ENCODE measurements at regions of chr18 and their contacts with region 1.

Region 1: DNA sequence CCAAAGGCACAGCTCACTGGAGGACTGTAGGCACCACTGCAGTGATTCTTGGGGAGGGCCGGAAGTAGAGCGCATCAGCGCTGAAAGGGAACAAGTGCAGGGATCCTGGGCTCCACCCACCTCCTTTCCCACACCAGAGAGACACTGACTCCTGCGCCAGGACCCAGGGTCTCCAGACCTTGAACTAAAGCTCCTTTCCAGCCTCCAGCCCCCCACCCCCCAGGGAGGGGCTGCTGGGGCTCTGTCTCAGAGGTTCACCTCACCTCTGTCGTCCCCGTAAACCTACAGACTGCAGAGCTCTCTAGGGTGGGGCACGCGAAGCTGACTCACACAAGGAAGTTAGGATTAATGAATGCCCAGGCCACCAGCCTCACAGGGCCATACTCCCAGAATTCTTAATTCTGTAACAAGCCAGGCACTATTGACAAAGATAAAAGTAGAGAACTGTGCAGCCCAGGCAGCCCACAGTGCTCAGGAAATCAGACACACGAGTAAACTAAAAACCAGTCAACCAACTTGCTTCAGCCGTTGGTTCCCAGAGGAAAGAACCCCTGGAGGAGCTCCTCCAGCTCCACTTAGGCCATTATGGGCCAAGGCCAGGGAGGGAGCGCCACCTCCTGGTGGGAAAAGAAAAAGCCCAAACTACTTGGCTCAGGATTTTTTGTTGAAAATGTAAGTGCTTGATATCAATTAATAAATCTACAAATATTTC is 45.1 kb upstream of the ACAA2 start:
- DNase-seq: peak; percentile 89
- H3K4me3 Mint-ChIP-seq: no peak overlapping the region
- H3K27ac Mint-ChIP-seq: no peak overlapping the region
- H3K4me1 Mint-ChIP-seq: peaks cover 2% of the 10 kb centered on the region
- H3K27me3 Mint-ChIP-seq: no peaks in the 10 kb centered on the region

Region 2: DNA sequence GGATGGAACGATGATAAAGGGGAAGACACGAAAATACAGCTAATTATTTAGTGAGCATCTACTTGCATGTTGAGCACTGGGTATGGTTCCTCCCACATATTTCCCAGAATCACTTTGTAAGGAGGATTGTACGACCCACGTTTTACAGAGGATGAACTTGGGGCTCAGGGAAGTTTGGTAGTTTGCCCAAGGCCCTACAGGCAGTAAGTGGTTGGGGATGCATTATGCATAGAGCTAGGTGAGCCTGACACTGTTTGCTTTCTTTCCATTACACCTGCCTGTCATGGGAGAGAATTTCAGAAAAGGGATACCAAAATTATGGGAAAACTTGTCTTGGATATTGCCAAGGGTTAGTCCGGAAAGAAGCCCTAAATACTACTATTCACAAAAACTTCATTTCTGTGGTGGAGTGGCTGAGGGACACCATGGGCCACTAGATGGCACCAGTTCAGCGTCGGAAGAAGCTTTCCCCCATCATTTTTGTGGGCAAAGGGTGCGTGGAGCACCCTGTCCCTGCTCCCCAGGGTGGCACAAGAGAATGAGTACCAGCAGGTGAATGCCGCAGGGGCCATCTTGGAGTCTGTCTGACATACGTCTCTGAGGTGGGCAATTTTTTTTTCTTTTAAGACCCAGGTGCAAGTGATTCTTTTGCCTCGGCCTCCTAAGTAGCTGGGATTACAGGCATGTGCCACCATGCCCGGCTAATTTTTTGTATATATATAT is 347.9 kb before region 1 on chr18:
- intact Hi-C with region 1: loop called (anchors 1 kb)
- DNase-seq: peak; percentile 84
- H3K4me3 Mint-ChIP-seq: no peak overlapping the region
- H3K27ac Mint-ChIP-seq: no peak overlapping the region
- H3K4me1 Mint-ChIP-seq: no peaks in the 10 kb centered on the region
- H3K27me3 Mint-ChIP-seq: peaks cover 15% of the 10 kb centered on the region

Region 3: DNA sequence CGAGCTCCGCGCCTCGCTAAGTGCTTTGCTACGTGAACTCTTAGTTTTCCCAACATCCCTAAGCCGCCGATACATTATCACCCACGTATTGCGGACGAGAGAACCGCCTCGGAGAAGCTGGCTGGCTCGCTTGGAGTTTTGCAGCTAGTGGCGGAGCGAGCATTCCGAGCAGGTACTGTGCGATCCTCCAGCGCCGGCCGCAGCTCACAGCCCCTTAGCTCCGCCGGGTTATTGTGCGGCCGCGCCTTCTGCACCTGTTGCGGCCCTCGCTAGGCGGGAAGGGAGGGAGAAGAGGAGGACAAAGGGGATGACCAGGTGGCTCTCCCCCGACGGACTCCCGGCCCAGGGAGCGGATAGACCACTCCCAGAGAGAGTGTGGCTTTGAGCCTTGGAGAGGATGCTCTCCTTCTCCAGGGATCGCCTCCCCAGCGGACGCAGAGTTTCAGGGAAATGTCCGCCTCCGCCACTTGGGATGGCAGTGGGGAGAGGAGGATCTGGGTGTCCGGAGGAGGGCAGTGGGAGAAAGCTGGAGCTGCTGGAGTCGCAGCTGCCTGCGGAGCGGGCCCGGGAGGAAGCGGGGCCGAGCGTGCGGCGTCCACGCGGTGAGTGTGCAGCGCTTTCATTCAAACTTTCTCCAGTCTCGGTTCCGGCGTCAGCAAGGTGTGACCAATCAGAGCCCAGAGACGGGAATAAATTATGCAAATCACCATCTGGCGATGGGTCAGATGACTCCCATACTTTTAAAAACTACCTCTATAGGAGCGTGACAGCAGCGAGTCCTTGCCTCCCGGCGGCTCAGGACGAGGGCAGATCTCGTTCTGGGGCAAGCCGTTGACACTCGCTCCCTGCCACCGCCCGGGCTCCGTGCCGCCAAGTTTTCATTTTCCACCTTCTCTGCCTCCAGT is 296.9 kb before region 1 on chr18 and contains the start of gene LIPG:
- intact Hi-C with region 1: loop called (anchors 1 kb)
- DNase-seq: peak; percentile 85
- H3K4me3 Mint-ChIP-seq: peak within 1 kb of the TSS; percentile 73
- H3K27ac Mint-ChIP-seq: no peak within 1 kb of the TSS
- H3K4me1 Mint-ChIP-seq: peaks cover 31% of the 10 kb centered on the region
- H3K27me3 Mint-ChIP-seq: peaks cover 78% of the 10 kb centered on the region
- total RNA-seq, gene LIPG: 0.57 and 0.82 TPM in 2 replicates

Region 4: DNA sequence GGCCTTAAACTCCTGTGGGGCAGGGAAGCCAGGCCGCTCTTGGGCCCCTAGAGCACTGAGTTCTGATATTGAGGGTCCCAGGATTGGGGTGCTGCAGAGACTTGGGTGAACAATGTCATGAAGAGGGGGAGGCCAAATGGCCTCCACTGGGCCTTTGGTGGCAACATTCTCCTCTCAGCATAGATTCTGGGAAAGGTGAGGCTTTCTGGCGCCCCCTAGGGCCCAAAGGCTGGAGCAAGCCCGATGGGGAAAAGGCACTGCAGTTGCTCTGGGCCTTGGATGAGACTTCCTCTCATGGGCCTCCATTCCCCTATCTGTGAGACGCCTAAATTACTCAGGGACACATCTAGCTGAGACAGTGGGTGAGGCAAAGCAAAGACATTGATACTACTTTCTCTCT is 129.9 kb before region 1 on chr18:
- intact Hi-C with region 1: loop called (anchors 5 kb)
- DNase-seq: peak; percentile 81
- H3K4me3 Mint-ChIP-seq: no peak overlapping the region
- H3K27ac Mint-ChIP-seq: no peak overlapping the region
- H3K4me1 Mint-ChIP-seq: peaks cover 6% of the 10 kb centered on the region
- H3K27me3 Mint-ChIP-seq: peaks cover 13% of the 10 kb centered on the region

Measured in activated CD4-positive, alpha-beta T cell treated with anti-CD3 and anti-CD28 coated beads, Interleukin-2, amount 10 ng/mL, durations not matched to agents 24 days and 14 days (primary cell).